Cardiac septum (tissue), 1 donor: ENCODE measurements at regions of chr7 and their contacts with region 1.

Region 1: GRCh38 chr7:1412322-1413261 is 46.7 kb downstream of the MICALL2 start:
- DNase-seq: peak; percentile 89

Region 2: DNA sequence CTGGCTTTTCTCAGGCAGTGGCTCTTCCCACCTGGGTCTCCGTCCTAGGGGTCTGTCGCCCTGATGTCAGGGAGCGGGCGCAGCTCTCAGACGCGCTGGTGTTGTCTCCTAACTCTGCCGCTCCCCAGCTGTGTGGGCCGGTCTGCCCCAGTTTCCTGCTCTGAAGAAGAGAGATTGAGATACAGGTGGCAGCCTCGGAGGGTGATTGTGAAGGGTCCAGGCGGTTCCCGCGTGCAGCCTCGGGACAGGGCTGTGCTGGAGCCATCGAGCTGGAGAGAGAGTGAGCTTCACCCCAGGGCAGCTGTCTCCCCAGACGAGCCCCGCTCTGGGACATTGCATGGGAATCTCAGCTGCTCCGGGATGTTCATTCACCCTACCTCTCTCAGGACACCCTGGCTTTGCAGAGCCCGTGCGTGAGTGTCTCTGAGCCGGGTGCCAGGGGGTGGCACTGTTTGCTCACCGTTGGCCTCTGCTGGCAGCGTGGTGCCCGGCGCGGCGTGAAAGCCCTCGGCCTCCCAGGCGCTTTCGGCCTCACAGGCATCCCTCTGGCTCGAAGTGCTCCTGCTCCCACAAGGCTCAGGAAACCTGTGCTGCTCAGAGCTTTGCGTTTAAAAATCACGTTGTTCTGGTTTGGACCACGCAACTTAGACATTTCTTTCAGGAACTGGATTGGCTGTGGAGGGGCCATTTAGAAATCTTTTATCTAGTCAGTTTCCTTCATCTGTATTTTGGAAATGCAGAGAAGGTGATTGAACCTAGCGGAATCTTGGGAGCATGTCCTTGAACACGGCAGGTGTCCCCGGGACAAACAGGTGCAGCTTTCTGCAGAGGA is 218.8 kb before region 1 on chr7:
- intact Hi-C with region 1: loop called (anchors 5 kb)
- DNase-seq: peak; percentile 82

Region 3: DNA sequence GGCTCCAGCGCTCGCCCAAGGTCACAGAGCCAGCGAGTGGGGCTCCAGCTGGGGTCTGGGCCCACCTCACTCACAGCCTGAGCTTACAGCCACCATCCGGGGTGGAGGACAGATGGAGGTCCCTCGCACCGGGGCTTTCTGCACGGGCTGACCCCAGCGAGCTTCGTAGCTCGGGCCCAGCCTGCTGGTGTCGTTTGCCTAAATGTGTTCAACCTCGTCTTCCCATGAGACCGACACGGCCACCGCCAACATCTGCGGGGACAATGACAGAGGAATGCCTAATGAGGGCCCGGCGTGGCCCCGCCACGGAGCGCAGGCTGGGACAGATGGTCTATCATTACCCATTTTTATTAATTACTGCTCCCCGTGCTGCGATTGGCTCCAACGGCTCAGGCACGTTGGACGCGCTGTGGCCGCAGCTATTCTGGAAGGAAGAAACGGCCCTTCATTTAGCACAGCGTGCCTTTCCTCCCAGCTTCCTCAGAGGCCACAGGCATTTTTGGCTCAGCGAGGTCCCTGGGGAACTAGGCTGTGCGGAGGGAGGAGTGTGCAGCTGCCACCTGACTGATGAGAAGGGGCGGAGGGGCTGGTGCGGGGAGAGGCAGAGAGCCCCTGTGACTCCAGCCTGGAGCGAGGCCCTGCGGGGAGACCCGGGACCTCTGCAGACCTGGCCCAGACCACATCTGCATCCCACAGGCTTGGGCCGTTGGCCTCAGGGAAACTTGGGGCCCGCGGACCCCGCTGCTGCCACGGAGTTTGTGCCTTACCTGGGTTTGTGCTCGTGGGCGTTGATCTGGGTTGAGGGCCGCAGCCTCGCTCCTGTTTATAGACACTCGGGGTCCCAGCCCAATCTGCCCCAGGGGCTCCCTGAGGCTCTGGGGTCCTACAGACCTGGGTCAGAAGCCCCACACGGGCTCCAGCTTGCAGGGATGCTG is 234.6 kb after region 1 on chr7:
- intact Hi-C with region 1: no loop called
- DNase-seq: no peak

Region 4: DNA sequence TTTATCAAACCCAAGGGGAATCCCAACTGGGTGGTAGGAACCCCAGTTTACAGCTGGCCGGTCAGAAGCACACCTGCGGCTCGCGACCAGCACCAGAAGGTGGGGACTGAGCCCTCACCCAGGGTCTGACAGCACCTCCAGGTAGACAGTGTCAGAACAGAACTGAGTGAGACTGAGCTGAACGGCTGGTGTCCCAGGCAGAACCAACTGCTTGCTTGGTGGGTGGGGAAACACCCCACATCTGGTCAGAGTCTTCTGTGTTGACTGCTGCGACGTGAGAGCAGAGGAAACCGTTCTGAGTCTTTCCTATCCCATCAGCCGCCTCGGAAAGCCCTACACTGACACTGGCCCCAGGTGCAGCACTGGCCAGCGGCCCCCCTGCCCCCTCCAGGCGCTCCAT is 659.5 kb after region 1 on chr7:
- intact Hi-C with region 1: no loop called
- DNase-seq: no peak